ENCODE measurements at regions of chr3 and their contacts with region 1.

Region 1: GRCh38 chr3:44223299-44223698 is 18.4 kb upstream of the TOPAZ1 start:
- DNase-seq: no peak
- ATAC-seq: no peak
- H3K4me3 Mint-ChIP-seq: no peak overlapping the region
- H3K27ac Mint-ChIP-seq: no peak overlapping the region
- H3K4me1 Mint-ChIP-seq: no peaks in the 10 kb centered on the region
- H3K27me3 Mint-ChIP-seq: peaks cover 23% of the 10 kb centered on the region
- CTCF ChIP-seq: no peak

Region 2: DNA sequence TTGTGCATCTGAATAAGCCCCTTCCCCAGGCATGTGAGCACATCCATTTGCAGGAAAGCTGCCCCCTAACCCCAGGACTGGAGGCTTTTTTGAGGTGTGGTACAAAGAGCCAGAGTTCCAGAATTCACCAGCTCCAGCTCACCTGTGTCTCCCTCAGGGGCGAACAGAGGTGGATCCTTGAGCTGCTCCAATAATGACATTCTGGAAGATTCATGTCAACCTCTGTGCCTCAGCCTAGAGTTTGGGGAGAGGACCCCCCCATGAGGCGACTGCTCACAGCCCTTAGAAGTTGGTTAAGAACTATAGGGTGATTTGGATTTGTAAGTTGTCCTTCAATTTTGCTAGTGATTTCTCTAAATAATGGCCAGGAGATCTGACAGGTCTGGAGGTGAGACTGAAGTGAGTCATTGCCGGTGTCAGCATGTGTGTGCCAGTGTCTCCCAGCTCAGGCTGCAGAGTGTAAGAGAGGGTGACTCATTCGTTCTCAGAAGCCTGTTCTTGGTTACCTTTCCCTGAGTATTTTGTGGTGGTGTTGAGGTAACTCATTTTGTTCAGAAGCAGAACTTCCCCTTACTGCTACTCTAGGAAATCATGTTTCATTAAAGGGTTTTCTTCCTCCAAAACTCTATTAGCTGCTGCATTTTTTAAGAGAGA is 118.5 kb before region 1 on chr3:
- CTCF ChIA-PET with region 1: no interaction called
- POLR2A ChIA-PET with region 1: no interaction called
- intact Hi-C with region 1: no loop called
- DNase-seq: peak; percentile 81
- ATAC-seq: peak; percentile 100
- H3K4me3 Mint-ChIP-seq: no peak overlapping the region
- H3K27ac Mint-ChIP-seq: peak overlapping the region; percentile 10
- H3K4me1 Mint-ChIP-seq: peaks cover 19% of the 10 kb centered on the region
- H3K27me3 Mint-ChIP-seq: peaks cover 29% of the 10 kb centered on the region
- CTCF ChIP-seq: no peak

Region 3: DNA sequence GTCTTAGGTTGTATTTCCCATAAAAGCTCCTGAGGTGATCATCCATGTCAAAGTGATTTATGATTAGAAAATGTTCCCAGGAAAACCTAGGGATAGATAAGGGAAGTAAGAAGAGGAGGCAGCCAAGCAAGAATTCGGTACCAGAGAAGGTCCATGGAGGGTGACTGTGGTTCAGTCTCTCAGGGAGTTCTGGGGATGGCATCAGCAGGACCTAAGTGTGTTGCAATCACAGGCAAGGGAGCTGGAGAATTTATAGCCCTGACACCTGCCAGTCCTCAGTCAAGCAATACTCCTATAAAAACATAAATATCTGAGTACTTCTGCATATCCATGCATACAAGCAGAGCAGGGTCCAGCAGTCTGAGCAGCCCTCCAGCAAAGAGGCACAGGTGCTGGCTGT is 77.2 kb before region 1 on chr3:
- CTCF ChIA-PET with region 1: no interaction called
- POLR2A ChIA-PET with region 1: no interaction called
- intact Hi-C with region 1: no loop called
- DNase-seq: no peak
- ATAC-seq: no peak
- H3K4me3 Mint-ChIP-seq: no peak overlapping the region
- H3K27ac Mint-ChIP-seq: no peak overlapping the region
- H3K4me1 Mint-ChIP-seq: no peaks in the 10 kb centered on the region
- H3K27me3 Mint-ChIP-seq: peaks cover 30% of the 10 kb centered on the region
- CTCF ChIP-seq: no peak

Region 4: DNA sequence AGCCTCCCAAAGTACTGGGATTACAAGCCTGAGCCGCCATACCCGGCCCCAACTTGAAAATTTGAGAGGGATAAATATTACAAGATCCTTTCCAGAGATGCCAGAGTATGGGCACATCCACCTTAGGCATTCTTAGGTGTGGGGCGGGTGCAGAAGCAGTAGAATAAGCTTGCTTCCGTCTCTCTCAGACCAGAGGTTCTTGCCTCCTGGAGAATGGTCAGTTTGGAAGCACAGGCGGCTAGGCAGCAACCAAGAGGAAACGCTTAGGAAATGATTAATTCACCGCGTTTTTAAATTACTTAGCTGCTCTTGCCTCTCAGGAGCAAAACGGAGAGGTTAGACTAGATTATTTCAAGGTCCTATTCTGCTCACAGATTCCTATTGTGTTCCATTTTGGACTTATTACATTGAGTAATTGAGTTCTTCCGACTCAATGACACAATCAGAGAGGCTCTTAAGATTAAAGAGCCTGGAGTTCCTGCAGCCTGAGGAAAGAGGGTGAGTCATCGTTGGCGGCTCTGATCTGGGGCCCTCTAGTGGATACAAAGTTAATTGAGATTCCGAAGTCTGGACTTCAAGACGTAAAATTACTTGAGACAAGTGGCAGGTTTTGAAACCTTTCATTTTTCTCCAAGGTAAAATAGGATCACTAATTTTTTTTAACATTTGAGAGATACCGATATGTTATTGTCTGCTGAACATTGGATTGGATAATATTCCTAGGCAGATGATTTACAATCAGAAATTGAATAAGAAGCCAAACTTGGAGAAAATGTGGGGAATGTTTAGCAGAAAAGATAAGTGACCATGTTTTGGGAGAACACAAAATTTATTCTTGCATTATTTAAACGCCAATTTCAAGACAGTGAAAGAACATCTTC is 12.5 kb after region 1 on chr3:
- CTCF ChIA-PET with region 1: interaction called, 12 read pairs
- POLR2A ChIA-PET with region 1: interaction called, 3 read pairs
- intact Hi-C with region 1: no loop called
- DNase-seq: peak; percentile 66
- ATAC-seq: peak; percentile 87
- H3K4me3 Mint-ChIP-seq: no peak overlapping the region
- H3K27ac Mint-ChIP-seq: no peak overlapping the region
- H3K4me1 Mint-ChIP-seq: peaks cover 11% of the 10 kb centered on the region
- H3K27me3 Mint-ChIP-seq: peaks cover 13% of the 10 kb centered on the region
- CTCF ChIP-seq: peak; percentile 72

Measured in activated CD8-positive, alpha-beta T cell treated with anti-CD3 and anti-CD28 coated beads for 36 hours (primary cell).